ENCODE measurements at regions of chr12 and their contacts with region 1.

Region 1: GRCh38 chr12:19186722-19187661 is 57.5 kb downstream of the PLEKHA5 start:
- DNase-seq: no peak
- ATAC-seq: peak; percentile 38

Region 2: GRCh38 chr12:18430425-18431048 is 756.5 kb before region 1 on chr12:
- intact Hi-C with region 1: loop called (anchors 5 kb)
- DNase-seq: peak; percentile 30
- ATAC-seq: peak; percentile 91

Region 3: GRCh38 chr12:18861287-18861858 is 325.6 kb before region 1 on chr12:
- intact Hi-C with region 1: loop called (anchors 5 kb)
- DNase-seq: no peak
- ATAC-seq: no peak

Region 4: GRCh38 chr12:19031032-19031431 is 156.0 kb before region 1 on chr12:
- intact Hi-C with region 1: loop called (anchors 10 kb)
- DNase-seq: no peak
- ATAC-seq: peak; percentile 21

Region 5: GRCh38 chr12:19138551-19138950 is 48.4 kb before region 1 on chr12:
- intact Hi-C with region 1: loop called (anchors 5 kb)
- DNase-seq: no peak
- ATAC-seq: no peak

Region 6: GRCh38 chr12:19288603-19289244 is 101.7 kb after region 1 on chr12:
- intact Hi-C with region 1: loop called (anchors 10 kb)
- DNase-seq: no peak
- ATAC-seq: peak; percentile 52